ENCODE measurements at regions of chr10 and their contacts with region 1.

Region 1: DNA sequence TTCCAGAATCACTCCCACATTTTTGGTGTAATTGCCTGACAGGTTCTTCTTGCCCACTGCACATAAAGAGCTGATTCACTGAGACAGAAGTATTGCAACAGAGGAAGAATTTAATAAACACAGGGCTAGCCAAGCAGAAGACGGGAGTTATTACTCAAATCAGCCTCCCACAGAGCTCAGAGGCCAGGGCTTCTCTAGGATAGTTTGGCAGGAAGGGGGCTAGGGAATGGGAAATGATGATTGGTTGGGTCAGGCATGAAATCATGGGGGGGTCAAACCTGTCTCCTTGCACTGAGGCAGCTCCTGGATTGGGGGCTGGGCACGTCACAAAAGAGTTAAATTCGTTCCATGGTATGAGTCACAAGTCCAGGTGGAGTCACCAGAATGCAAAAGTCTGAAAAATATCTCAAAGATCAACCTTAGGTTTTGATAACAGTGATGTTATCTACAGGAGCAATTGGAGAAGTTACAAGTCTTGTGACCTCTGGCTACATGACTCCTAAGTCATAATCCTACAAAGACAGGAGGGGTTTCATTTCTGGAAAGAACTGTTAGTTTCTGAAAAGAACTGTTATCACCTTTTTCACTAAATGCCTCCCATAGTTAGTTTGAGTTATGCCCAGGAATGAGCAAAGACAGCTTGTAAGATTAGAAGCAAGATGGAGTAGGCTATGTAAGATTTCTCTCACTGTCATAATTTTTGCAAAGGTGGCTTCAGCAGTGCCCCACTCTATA is 30.3 kb upstream of the ERCC6 start:
- DNase-seq: no peak
- H3K4me3 Mint-ChIP-seq: peak overlapping the region; percentile 30
- H3K27ac Mint-ChIP-seq: peak overlapping the region; percentile 84
- H3K4me1 Mint-ChIP-seq: peaks cover 60% of the 10 kb centered on the region
- H3K27me3 Mint-ChIP-seq: no peaks in the 10 kb centered on the region

Region 2: DNA sequence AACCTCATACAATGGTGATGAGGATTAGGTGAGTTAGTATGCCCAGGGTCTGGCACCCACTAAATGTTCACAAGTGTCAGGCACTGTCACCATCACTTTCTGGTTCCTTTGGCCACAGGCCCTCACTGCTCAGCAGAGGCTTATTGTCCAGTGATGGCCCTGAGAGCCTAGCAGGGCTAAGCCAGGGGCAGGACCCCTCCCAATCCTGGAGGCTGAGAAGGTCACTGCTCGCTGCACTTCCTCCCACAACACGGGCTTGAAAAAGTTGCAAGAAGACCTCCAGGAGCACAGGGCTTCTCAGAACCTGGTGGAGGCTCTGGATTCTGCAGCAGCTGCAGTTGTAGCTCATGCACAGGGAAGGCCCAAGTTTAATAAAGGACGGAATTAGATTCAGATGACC is 221.4 kb before region 1 on chr10:
- intact Hi-C with region 1: no loop called
- DNase-seq: no peak
- H3K4me3 Mint-ChIP-seq: no peak overlapping the region
- H3K27ac Mint-ChIP-seq: no peak overlapping the region
- H3K4me1 Mint-ChIP-seq: no peaks in the 10 kb centered on the region
- H3K27me3 Mint-ChIP-seq: peaks cover 10% of the 10 kb centered on the region

Region 3: GRCh38 chr10:49538381-49539319 is 30.5 kb before region 1 on chr10 and contains the start of gene ERCC6:
- intact Hi-C with region 1: loop called (anchors 1 kb)
- DNase-seq: peak; percentile 96
- H3K4me3 Mint-ChIP-seq: peak within 1 kb of the TSS; percentile 89
- H3K27ac Mint-ChIP-seq: peak within 1 kb of the TSS; percentile 94
- H3K4me1 Mint-ChIP-seq: peaks cover 36% of the 10 kb centered on the region
- H3K27me3 Mint-ChIP-seq: peaks cover 3% of the 10 kb centered on the region
- total RNA-seq, gene ERCC6: 22.7 and 26.2 TPM in 2 replicates

Region 4: GRCh38 chr10:49550579-49550978 is 18.6 kb before region 1 on chr10:
- intact Hi-C with region 1: loop called (anchors 1 kb)
- DNase-seq: no peak
- H3K4me3 Mint-ChIP-seq: no peak overlapping the region
- H3K27ac Mint-ChIP-seq: no peak overlapping the region
- H3K4me1 Mint-ChIP-seq: peaks cover 13% of the 10 kb centered on the region
- H3K27me3 Mint-ChIP-seq: peaks cover 8% of the 10 kb centered on the region